CD8-positive, alpha-beta memory T cell (primary cell): ENCODE measurements at regions of chr15 and their contacts with region 1.

Region 1: GRCh38 chr15:92808978-92809879 is 90.9 kb upstream of the CHD2 start:
- DNase-seq: peak; percentile 96 to 100 (median 99)
- H3K4me3 ChIP-seq: peak overlapping the region; percentile 63
- H3K4me3 Mint-ChIP-seq: peak overlapping the region; percentile 78 to 93 (median 86)
- H3K27ac ChIP-seq: peak overlapping the region; percentile 94
- H3K27ac Mint-ChIP-seq: peak overlapping the region; percentile 88 to 99 (median 98)
- H3K4me1 ChIP-seq: peaks cover 52% of the 10 kb centered on the region
- H3K4me1 Mint-ChIP-seq: peaks cover 34 to 53% (median 52%) of the 10 kb centered on the region in 3 donors
- H3K27me3 ChIP-seq: no peaks in the 10 kb centered on the region
- H3K27me3 Mint-ChIP-seq: no peaks in the 10 kb centered on the region

Region 2: DNA sequence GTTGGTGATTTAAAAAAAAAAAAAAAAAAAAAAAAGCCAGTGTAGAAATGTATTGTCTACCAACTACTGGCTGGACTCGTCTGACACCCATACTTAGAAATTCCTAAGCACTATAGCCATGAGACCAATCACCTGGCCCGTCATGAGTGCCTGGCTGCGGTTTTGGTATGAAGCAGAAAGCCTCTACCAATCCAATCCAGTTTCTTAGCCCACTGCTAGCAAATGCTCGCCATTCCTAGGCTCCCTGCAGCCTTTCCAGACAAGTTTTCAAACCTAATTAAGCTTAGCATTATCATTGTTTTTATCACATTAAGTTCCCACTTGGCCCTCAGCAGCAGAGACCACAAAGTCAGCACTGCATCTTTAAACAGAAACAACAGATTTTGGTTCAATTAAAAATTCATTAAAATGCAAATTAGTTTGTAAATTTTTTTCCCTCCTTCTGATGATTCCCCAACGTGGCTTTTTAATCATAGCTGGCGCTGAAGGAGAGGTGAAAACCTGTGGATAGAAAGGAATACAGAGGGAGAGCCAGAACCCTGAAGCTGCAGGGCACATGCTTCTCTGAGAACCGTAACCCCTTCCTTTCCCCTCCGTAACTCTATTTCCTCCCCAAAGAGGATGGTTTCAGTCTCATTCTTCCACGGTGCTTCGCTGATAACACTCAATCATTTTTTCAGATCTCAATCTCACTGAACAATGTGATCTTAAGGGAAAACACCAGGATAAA is 447.7 kb before region 1 on chr15:
- CTCF ChIA-PET with region 1: no interaction called
- POLR2A ChIA-PET with region 1: no interaction called
- DNase-seq: no peak
- H3K4me3 ChIP-seq: no peak overlapping the region
- H3K4me3 Mint-ChIP-seq: no peak overlapping the region
- H3K27ac ChIP-seq: no peak overlapping the region
- H3K27ac Mint-ChIP-seq: no peak overlapping the region
- H3K4me1 ChIP-seq: no peaks in the 10 kb centered on the region
- H3K4me1 Mint-ChIP-seq: no peaks in the 10 kb centered on the region
- H3K27me3 ChIP-seq: no peaks in the 10 kb centered on the region
- H3K27me3 Mint-ChIP-seq: peaks cover 16 to 25% of the 10 kb centered on the region in 2 donors

Region 3: GRCh38 chr15:92733934-92734521 is 75.2 kb before region 1 on chr15:
- CTCF ChIA-PET with region 1: no interaction called
- POLR2A ChIA-PET with region 1: no interaction called
- DNase-seq: peak in 1 of 5 donors; percentile 28
- H3K4me3 ChIP-seq: peak overlapping the region; percentile 41
- H3K4me3 Mint-ChIP-seq: peak overlapping the region; percentile 73 to 92 (median 82)
- H3K27ac ChIP-seq: no peak overlapping the region
- H3K27ac Mint-ChIP-seq: peak overlapping the region in 7 of 8 donors; percentile 13 to 91 (median 73)
- H3K4me1 ChIP-seq: peaks cover 8% of the 10 kb centered on the region
- H3K4me1 Mint-ChIP-seq: peaks cover 5 to 12% (median 8%) of the 10 kb centered on the region in 3 donors
- H3K27me3 ChIP-seq: no peaks in the 10 kb centered on the region
- H3K27me3 Mint-ChIP-seq: peaks cover 8 to 10% of the 10 kb centered on the region in 2 donors

Region 4: DNA sequence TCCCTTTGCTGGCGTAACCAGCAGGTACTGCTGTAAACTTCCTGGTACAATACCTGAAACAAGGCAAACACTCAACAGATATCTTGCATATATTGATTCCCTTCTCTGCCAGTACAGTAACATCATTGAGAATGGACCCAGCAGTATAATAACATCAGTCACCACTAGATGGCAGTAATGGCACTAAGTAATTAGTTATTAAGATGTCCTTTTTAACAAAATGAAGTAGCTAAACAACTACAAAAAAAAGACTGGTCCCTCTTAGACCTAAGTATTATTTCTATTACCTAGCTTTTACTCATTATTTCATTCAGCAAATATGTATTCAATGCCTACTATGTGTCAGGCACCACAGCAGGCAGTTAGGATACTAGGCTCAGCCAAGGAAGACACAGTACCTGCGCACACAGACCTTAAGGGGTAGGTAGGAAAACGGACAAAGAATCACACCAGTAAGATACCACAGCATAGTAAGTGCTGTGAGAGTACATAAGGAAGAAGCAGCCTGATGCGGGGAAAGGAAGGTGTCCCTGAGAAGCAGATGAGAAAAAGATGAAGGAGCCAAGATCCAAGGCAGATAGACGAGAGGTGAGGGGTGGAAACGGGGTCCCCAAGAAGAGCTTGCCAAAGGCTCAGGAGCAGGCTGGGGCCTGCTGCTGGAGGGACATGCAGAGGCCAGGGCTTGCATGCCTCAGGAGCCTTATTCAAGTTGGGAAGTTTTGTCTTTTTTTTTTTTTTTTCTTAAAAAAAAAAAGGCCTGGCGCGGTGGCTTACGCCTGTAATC is 11.9 kb before region 1 on chr15:
- CTCF ChIA-PET with region 1: interaction called, 28 read pairs
- POLR2A ChIA-PET with region 1: interaction called, 8 read pairs
- DNase-seq: peak in 4 of 5 donors; percentile 16 to 68 (median 58)
- H3K4me3 ChIP-seq: no peak overlapping the region
- H3K4me3 Mint-ChIP-seq: no peak overlapping the region
- H3K27ac ChIP-seq: no peak overlapping the region
- H3K27ac Mint-ChIP-seq: peak overlapping the region in 5 of 8 donors; percentile 52 to 89 (median 79)
- H3K4me1 ChIP-seq: no peaks in the 10 kb centered on the region
- H3K4me1 Mint-ChIP-seq: peaks cover 4 to 7% (median 6%) of the 10 kb centered on the region in 3 donors
- H3K27me3 ChIP-seq: no peaks in the 10 kb centered on the region
- H3K27me3 Mint-ChIP-seq: no peaks in the 10 kb centered on the region

Region 5: DNA sequence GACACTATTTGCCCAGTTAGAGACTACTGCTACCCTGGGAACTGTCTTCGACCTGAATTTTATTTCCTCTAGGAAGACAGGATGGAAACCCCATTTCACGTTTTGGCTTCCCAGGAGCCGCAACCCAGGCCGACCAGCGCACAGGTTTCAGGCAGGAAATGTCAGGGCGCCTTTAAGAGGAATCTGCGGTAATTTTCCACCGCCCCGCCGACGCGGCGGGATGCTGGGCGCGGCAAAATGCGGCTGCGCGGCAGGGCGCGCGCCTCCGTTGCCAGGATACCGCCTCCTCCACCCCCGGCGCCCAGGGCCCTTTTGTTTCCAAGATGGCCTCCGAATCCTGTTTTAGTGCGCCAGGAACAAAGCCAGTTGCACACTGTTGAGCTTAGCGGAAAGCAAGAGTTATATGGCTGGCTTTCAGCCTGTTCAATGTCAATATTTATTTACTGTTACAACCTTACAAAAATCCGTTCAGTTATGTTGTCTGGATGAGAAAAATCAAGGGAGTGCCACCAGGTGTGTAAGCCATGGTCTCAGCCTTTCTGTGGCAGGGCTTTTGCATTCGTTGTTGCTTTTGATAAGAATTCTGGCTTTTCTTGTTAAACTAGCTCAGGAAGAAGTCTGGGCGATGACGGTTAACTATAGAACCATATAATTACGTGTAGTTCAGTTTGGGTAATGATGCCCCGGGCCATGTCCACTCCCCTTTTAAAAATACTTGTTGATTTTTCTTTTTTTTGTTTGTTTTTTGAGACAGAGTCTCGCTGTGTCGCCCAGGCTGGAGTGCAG is 11.2 kb after region 1 on chr15:
- CTCF ChIA-PET with region 1: interaction called, 35 read pairs
- POLR2A ChIA-PET with region 1: interaction called, 22 read pairs
- DNase-seq: peak; percentile 75 to 90 (median 86)
- H3K4me3 ChIP-seq: peak overlapping the region; percentile 60
- H3K4me3 Mint-ChIP-seq: peak overlapping the region; percentile 85 to 96 (median 92)
- H3K27ac ChIP-seq: peak overlapping the region; percentile 58
- H3K27ac Mint-ChIP-seq: peak overlapping the region; percentile 95 to 98 (median 97)
- H3K4me1 ChIP-seq: peaks cover 55% of the 10 kb centered on the region
- H3K4me1 Mint-ChIP-seq: peaks cover 32 to 60% (median 49%) of the 10 kb centered on the region in 3 donors
- H3K27me3 ChIP-seq: no peaks in the 10 kb centered on the region
- H3K27me3 Mint-ChIP-seq: no peaks in the 10 kb centered on the region

Region 6: DNA sequence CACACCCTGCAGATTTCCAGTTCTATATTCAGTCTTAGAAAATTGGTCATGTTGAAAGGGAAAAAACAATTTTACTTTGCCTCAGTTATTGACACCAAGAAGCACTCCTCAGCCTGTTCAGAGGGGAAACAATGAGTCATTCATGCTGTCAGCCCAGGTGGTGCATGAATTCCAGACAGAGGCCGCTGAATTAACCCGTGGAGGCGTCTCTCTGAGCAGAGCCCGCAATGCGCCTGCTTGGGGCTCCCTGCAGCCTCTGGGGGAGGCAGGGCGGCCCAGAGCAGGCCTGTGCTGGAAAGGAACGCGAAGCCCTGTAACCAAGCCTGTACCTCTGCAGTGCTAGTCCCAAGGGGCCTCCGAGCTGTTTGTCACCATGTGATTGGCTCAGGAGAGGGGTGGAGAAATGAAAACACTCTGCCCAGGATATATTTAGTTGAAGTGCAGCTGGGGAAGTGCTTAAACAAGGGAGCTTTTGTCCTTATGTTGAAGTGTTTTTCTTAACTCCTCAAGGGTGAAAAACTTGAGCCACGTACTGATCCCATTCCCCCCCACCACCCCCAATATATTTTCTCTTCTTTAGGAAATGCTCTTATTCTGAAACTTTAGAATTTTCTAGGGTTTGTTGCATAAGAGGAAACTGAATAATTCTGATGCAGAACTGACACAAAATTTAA is 22.6 kb after region 1 on chr15:
- CTCF ChIA-PET with region 1: interaction called, 43 read pairs
- POLR2A ChIA-PET with region 1: interaction called, 44 read pairs
- DNase-seq: peak; percentile 70 to 97 (median 84)
- H3K4me3 ChIP-seq: peak overlapping the region; percentile 30
- H3K4me3 Mint-ChIP-seq: peak overlapping the region; percentile 40 to 88 (median 80)
- H3K27ac ChIP-seq: peak overlapping the region; percentile 83
- H3K27ac Mint-ChIP-seq: peak overlapping the region; percentile 95 to 99 (median 97)
- H3K4me1 ChIP-seq: peaks cover 45% of the 10 kb centered on the region
- H3K4me1 Mint-ChIP-seq: peaks cover 34 to 45% (median 44%) of the 10 kb centered on the region in 3 donors
- H3K27me3 ChIP-seq: no peaks in the 10 kb centered on the region
- H3K27me3 Mint-ChIP-seq: peaks cover 0 to 2% of the 10 kb centered on the region in 2 donors

Region 7: DNA sequence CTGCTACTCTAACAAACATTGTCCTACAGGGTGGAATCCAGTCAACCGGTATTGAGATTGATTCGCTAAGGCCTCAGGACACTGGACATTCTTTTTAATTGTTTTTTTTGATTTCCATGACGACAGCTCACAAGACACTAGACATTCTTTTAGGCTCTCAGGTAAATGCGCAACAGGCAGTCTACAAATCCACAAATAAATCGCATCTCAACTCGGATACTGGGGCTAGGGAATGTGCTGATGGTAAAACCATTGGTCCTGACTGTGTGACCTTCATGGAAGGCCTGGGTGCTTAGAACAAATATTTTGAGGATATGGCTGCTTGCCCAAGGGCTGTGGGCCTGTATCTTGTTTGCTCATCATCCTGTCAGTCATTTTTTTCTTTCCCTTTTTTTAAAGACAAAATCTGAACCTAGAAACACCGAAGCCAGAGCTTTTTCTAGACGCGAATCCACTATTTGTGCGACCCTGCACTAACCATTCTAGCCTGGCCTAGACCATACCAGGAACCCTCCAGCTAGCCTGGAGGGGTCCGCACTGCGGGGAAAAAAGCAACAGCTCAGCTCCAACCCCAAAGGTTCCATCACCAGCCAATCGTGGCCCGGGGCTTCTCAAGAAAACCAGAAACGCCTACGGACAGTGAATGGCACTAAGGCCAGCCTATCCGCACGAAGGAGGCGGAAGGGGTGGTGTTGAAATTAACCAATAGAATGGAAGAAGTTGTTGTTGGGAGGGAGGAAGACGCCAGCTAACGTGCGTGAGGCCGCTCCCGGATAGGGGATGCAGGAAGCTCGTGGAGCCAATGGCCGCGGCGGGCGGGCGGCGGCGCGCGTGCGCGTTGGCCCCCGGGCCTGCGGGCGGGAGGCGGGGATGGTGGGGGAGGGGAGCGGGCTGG is 72.8 kb after region 1 on chr15:
- CTCF ChIA-PET with region 1: interaction called, 113 read pairs
- POLR2A ChIA-PET with region 1: interaction called, 289 read pairs
- DNase-seq: peak; percentile 95 to 99 (median 98)
- H3K4me3 ChIP-seq: peak overlapping the region; percentile 51
- H3K4me3 Mint-ChIP-seq: peak overlapping the region; percentile 88 to 91 (median 89)
- H3K27ac ChIP-seq: peak overlapping the region; percentile 76
- H3K27ac Mint-ChIP-seq: peak overlapping the region; percentile 94 to 98 (median 98)
- H3K4me1 ChIP-seq: peaks cover 64% of the 10 kb centered on the region
- H3K4me1 Mint-ChIP-seq: peaks cover 58 to 70% (median 62%) of the 10 kb centered on the region in 3 donors
- H3K27me3 ChIP-seq: no peaks in the 10 kb centered on the region
- H3K27me3 Mint-ChIP-seq: peaks cover 0 to 7% of the 10 kb centered on the region in 2 donors

Region 8: GRCh38 chr15:92889390-92890107 is 80.3 kb after region 1 on chr15:
- CTCF ChIA-PET with region 1: interaction called, 113 read pairs
- POLR2A ChIA-PET with region 1: interaction called, 289 read pairs
- DNase-seq: no peak
- H3K4me3 ChIP-seq: no peak overlapping the region
- H3K4me3 Mint-ChIP-seq: peak overlapping the region; percentile 61 to 80 (median 68)
- H3K27ac ChIP-seq: no peak overlapping the region
- H3K27ac Mint-ChIP-seq: peak overlapping the region; percentile 56 to 87 (median 82)
- H3K4me1 ChIP-seq: peaks cover 84% of the 10 kb centered on the region
- H3K4me1 Mint-ChIP-seq: peaks cover 76 to 97% (median 93%) of the 10 kb centered on the region in 3 donors
- H3K27me3 ChIP-seq: no peaks in the 10 kb centered on the region
- H3K27me3 Mint-ChIP-seq: peaks cover 0 to 1% of the 10 kb centered on the region in 2 donors

Region 9: GRCh38 chr15:92917606-92918407 is 108.6 kb after region 1 on chr15:
- CTCF ChIA-PET with region 1: interaction called, 101 read pairs
- POLR2A ChIA-PET with region 1: interaction called, 60 read pairs
- DNase-seq: peak; percentile 83 to 93 (median 86)
- H3K4me3 ChIP-seq: peak overlapping the region; percentile 25
- H3K4me3 Mint-ChIP-seq: peak overlapping the region in 6 of 7 donors; percentile 55 to 79 (median 64)
- H3K27ac ChIP-seq: peak overlapping the region; percentile 20
- H3K27ac Mint-ChIP-seq: peak overlapping the region; percentile 67 to 100 (median 93)
- H3K4me1 ChIP-seq: peaks cover 90% of the 10 kb centered on the region
- H3K4me1 Mint-ChIP-seq: peaks cover 74 to 94% (median 90%) of the 10 kb centered on the region in 3 donors
- H3K27me3 ChIP-seq: no peaks in the 10 kb centered on the region
- H3K27me3 Mint-ChIP-seq: peaks cover 0 to 3% of the 10 kb centered on the region in 2 donors